Heart left ventricle (tissue), 16 donors: ENCODE measurements at regions of chr7 and their contacts with region 1.

Region 1: DNA sequence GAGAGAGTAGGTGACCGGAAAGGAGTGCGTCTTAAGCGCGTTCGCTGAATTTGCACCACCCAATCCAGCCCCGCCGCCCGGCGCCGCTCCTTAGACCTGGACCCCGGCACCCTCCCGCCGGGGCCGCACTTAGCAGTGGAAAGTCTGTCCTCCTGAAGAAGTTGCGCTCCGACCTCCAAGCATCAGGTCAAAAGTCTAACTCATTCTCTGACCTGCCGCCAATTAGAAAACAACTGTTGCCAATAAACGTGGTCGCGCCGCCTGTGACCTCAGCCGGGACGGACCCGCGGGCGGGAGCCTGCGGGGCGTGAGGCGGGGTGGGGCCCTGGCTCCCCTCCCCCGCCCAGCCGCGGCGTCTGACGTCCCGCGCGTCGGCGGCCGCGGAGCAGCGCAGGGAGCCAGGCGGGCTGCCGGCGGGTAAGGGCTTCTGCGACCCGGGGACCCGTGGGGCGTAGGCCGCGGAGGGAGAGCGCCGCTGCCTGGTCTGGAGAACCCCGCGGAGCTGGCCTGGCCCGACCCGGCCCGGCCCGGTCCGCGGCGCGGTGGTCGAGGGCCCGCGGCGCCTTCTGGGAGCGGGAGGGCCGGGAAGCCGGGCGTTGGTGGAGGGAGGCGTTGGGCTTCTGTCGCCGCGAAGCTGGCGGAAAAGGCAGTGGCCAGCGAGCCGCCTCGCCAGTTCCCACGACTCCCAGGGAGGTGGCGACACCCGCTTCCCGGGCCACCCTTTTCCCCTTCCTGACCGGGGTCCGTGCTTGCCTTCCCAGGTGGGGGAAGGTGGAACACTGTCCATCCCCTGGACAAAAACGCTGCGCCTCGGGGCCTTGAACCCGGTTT is at the start of gene BCAP29:
- DNase-seq: peak; percentile 85 to 91 (median 87)
- ATAC-seq: peak; percentile 84 to 98 (median 96)
- H3K4me3 ChIP-seq: peak within 1 kb of the TSS; percentile 74 to 89 (median 81)
- H3K27ac ChIP-seq: peak within 1 kb of the TSS; percentile 95 to 99 (median 97)
- H3K4me1 ChIP-seq: peaks cover 0 to 44% (median 26%) of the 10 kb centered on the region in 12 donors
- H3K27me3 ChIP-seq: no peaks in the 10 kb centered on the region
- CTCF ChIP-seq: peak in 9 of 12 donors; percentile 27 to 65 (median 48)
- POLR2A ChIP-seq: peak; percentile 71 to 90
- total RNA-seq, gene BCAP29: 96.2 to 241 (median 117) TPM

Region 2: DNA sequence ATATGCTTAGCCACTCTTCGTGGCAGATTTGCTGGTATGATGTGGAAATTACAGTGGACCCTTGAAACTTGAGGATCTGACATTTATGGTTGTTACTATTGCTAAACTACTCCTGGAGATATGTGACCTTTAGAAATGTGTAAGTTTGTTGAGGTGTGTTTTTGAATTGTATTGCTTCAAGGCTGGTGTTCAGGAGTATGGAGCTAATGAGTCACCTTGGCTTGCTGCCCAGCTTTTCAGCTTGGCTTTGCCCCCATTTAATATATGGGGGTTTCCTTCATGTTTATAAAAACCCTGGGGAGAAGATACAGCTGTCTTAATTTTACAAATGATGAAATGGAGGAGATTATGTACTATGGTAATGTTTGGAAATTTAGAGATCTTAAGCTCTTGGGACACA is 399.7 kb before region 1 on chr7:
- intact Hi-C with region 1: loop called in 1 of 10 experiments (anchors 10 kb)
- DNase-seq: peak in 1 of 5 donors; percentile 46
- ATAC-seq: peak in 3 of 4 donors; percentile 49 to 53 (median 50)
- H3K4me3 ChIP-seq: no peak overlapping the region
- H3K27ac ChIP-seq: peak overlapping the region in 2 of 12 donors; percentile 22 to 23
- H3K4me1 ChIP-seq: peaks cover 0 to 63% (median 33%) of the 10 kb centered on the region in 12 donors
- H3K27me3 ChIP-seq: no peaks in the 10 kb centered on the region
- CTCF ChIP-seq: no peak
- POLR2A ChIP-seq: no peak

Region 3: DNA sequence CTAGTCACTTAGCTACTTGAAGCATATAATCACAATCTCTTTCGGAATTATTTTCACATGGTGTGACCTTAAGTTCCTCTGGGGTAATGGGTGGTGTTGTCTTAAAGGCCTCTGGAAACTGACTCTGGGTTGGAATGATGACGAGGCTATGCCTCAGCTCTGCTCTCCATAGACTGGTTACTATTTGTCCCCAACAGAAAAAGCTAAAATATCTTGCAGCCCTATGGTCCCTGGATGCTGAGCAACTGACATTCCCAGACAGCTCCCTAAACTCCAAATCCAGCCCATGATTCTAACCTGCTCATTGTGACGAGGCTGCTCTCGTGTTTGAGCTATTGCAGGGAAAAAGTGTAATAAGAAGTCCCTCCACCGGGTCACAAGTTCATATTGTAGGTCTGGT is 359.7 kb before region 1 on chr7:
- intact Hi-C with region 1: no loop called
- DNase-seq: peak in 1 of 5 donors; percentile 36
- ATAC-seq: peak; percentile 66 to 88 (median 86)
- H3K4me3 ChIP-seq: no peak overlapping the region
- H3K27ac ChIP-seq: peak overlapping the region; percentile 32 to 93 (median 78)
- H3K4me1 ChIP-seq: peaks cover 0 to 38% (median 2%) of the 10 kb centered on the region in 12 donors
- H3K27me3 ChIP-seq: no peaks in the 10 kb centered on the region
- CTCF ChIP-seq: no peak
- POLR2A ChIP-seq: no peak

Region 4: GRCh38 chr7:107462740-107463444 is 117.2 kb before region 1 on chr7:
- intact Hi-C with region 1: loop called in 2 of 10 experiments (anchors 10 kb)
- DNase-seq: peak in 4 of 5 donors; percentile 49 to 72 (median 59)
- ATAC-seq: peak; percentile 74 to 92 (median 91)
- H3K4me3 ChIP-seq: no peak overlapping the region
- H3K27ac ChIP-seq: peak overlapping the region in 10 of 12 donors; percentile 8 to 52 (median 36)
- H3K4me1 ChIP-seq: peaks cover 0 to 25% (median 1%) of the 10 kb centered on the region in 12 donors
- H3K27me3 ChIP-seq: no peaks in the 10 kb centered on the region
- CTCF ChIP-seq: peak; percentile 53 to 90 (median 78)
- POLR2A ChIP-seq: no peak

Region 5: DNA sequence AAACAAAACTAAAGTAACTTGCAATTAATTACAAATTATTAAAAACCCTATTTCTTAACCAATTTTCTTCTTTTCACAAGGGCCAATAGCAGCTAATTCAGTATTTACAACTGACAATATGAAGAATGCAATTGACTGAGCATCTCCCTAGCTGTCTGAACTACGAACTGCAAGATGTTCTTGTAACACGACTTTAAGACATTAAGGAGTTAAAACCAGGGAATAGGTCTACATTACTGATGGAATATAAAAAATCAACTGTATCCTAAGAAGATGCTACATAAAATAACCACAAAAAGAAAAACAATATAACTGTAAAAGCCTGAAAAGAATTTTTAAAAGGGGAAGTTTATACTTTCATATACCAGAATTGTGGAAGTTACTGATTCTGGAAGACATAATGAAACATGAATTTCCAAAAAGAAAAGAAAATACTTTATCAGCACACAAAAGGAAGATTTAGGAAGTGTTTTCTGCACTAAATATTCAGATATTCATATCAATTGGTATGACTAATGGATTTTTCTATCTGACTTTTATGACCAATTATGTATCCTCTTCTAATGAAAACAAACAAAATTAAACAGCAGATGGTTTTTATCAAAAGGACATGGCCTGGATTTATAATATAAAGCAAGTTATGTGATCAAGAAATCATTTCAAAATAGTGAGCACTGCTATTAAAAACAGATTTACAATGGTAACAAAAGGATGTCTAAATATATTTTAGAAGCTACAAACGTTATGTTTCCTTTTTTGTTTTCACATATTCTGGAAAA is 108.6 kb before region 1 on chr7:
- intact Hi-C with region 1: loop called in 5 of 10 experiments (anchors 5 to 10 kb)
- DNase-seq: no peak
- ATAC-seq: peak; percentile 35 to 62 (median 48)
- H3K4me3 ChIP-seq: peak overlapping the region in 11 of 12 donors; percentile 6 to 56 (median 42)
- H3K27ac ChIP-seq: peak overlapping the region; percentile 12 to 84 (median 74)
- H3K4me1 ChIP-seq: peaks cover 0 to 18% (median 0%) of the 10 kb centered on the region in 12 donors
- H3K27me3 ChIP-seq: no peaks in the 10 kb centered on the region
- CTCF ChIP-seq: peak in 7 of 12 donors; percentile 9 to 44 (median 34)
- POLR2A ChIP-seq: no peak

Region 6: DNA sequence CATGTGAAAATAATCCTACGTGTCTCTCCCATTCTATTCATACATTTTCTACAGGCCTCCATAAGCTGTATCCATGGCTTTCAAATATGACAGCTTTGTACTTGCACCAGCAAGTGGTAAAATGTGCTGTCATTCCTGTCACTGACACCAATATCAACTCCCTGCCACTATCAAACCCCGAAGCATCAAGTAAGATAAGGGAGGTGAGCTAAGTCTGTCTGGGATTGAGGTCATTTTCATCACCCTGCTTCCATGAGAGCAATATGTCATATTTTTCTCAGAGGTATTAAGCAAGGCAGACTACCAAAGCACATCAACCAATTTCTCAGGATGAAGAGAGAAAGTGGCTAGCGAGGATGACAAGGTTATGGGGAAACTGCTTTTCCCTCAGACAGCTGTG is 99.2 kb before region 1 on chr7:
- intact Hi-C with region 1: loop called in 2 of 10 experiments (anchors 5 to 10 kb)
- DNase-seq: peak in 3 of 5 donors; percentile 25 to 32 (median 30)
- ATAC-seq: peak; percentile 91 to 98 (median 96)
- H3K4me3 ChIP-seq: peak overlapping the region in 10 of 12 donors; percentile 1 to 52 (median 39)
- H3K27ac ChIP-seq: peak overlapping the region; percentile 12 to 84 (median 74)
- H3K4me1 ChIP-seq: peaks cover 0 to 15% (median 1%) of the 10 kb centered on the region in 12 donors
- H3K27me3 ChIP-seq: no peaks in the 10 kb centered on the region
- CTCF ChIP-seq: no peak
- POLR2A ChIP-seq: no peak

Region 7: GRCh38 chr7:107594961-107595737 is 15.0 kb after region 1 on chr7:
- intact Hi-C with region 1: loop called in 1 of 10 experiments (anchors 2 kb)
- DNase-seq: peak in 2 of 5 donors; percentile 10 to 36
- ATAC-seq: peak; percentile 70 to 93 (median 89)
- H3K4me3 ChIP-seq: no peak overlapping the region
- H3K27ac ChIP-seq: peak overlapping the region; percentile 27 to 83 (median 68)
- H3K4me1 ChIP-seq: peaks cover 9 to 61% (median 32%) of the 10 kb centered on the region in 12 donors
- H3K27me3 ChIP-seq: no peaks in the 10 kb centered on the region
- CTCF ChIP-seq: no peak
- POLR2A ChIP-seq: no peak

Region 8: GRCh38 chr7:107725151-107725740 is 145.1 kb after region 1 on chr7:
- intact Hi-C with region 1: loop called in 1 of 10 experiments (anchors 10 kb)
- DNase-seq: peak in 3 of 5 donors; percentile 31 to 45 (median 36)
- ATAC-seq: no peak
- H3K4me3 ChIP-seq: no peak overlapping the region
- H3K27ac ChIP-seq: no peak overlapping the region
- H3K4me1 ChIP-seq: no peaks in the 10 kb centered on the region
- H3K27me3 ChIP-seq: peaks cover 0 to 14% (median 0%) of the 10 kb centered on the region in 9 donors
- CTCF ChIP-seq: peak; percentile 61 to 83 (median 77)
- POLR2A ChIP-seq: no peak